Left cardiac atrium (tissue), 4 donors: ENCODE measurements at regions of chr11 and their contacts with region 1.

Region 1: DNA sequence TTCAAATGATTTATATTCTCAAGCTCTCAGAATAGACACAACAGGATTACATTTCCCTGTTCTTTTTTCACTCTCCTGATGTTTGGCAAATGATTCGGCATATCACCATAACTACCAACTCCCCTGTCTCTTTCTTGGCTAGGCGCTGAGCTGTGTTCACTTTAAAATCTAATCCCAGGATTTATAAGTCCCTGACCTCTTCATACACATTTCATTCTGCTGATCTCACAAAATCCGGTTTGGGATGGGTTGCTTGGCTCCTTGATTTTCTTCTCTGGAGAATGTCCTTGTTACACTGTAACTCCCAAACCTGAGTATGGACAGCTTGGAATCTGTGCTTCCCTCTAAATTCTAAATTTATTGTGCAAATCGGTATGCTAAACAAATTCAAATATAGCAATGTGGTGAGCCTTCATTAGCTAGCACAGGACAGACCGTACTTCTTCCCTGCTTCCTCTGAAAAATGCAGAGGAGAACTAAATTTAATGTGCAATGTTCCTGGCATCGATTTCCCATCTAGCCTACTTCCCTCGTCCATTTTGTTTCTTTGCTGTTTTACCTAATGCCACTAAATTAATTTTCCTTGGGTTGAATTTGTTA is 858.5 kb upstream of the FAT3 start:
- DNase-seq: no peak
- ATAC-seq: no peak

Region 2: DNA sequence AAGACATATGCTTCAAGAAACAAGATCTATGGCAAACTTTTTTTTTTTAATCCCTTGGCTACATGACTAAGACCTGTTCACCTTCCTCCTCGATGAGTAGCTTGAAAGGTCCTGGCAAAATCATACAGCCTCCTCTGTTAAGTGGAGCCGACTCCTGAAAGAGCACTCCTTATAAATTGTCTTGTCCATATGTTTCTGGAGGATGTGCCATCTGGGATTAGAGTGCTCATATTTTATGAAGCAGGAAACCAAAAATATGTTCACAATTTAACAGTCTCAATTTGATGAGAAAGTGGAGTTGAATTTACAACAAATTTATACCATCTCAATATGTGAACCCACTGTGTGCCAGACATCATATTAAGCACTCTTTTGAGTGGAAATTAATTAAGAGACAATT is 53.5 kb before region 1 on chr11:
- intact Hi-C with region 1: no loop called
- DNase-seq: no peak
- ATAC-seq: no peak

Region 3: DNA sequence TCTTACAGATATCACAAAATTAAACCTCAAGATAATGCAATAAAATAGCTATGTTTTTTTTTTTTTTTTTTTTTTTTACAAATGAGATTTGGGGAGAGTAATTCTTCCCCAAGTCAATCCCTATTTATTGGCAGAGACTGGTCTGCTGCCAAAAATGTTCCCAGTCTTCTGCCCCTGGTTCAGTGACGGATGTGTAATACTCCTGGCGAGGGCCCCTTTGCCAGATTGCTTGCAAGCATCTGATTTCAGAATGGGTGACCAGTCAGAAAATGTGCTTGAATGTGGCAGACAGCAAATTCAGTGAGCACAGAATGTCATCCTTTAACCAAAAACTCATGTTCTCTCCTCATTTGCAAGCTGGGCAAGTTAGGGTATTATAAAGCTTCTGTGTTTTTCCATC is 1239.6 kb after region 1 on chr11:
- intact Hi-C with region 1: loop called in 1 of 2 experiments (anchors 10 kb)
- DNase-seq: no peak
- ATAC-seq: no peak